ENCODE measurements at regions of chr7 and their contacts with region 1.

Region 1: GRCh38 chr7:151631968-151632749 is 112.5 kb upstream of the RHEB start:
- DNase-seq: peak; percentile 84
- H3K4me3 Mint-ChIP-seq: peak overlapping the region; percentile 97
- H3K27ac Mint-ChIP-seq: peak overlapping the region; percentile 98
- H3K4me1 Mint-ChIP-seq: peaks cover 34% of the 10 kb centered on the region
- H3K27me3 Mint-ChIP-seq: no peaks in the 10 kb centered on the region

Region 2: DNA sequence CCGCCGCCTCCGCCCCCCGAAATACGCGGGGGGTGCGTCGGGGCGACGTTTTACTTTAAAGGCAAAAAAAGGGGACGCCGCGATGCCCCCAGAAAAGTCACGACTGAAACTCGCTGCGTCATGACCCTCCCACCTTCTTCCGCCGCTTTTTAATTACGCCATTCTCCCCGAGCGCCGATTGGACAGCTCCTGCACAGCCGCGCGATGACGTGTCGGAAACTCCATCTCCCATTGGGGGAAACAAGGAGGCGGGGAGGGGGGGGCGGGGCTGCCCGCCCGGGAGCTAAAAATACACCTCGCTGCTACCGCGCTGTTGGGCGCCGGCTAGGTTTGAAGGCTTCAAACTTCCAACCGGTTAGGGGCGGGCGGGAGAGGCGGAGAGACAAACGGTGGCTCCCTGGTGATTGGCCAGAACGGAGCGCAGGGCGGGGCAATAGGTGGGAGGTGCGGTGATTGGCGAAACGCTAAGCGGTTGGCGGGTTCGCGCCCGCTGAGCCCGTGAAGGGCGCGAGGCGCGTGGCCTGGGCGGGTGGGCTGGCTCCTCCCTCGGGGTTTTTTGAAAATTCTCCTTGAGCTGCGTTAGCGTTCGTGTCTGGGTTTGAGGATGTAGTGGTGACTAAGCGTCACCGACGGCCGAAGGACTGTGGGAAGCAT is 112.3 kb before region 1 on chr7 and contains the start of gene RHEB:
- CTCF ChIA-PET with region 1: interaction called, 4 read pairs
- POLR2A ChIA-PET with region 1: interaction called, 10 read pairs
- DNase-seq: peak; percentile 99
- H3K4me3 Mint-ChIP-seq: peak within 1 kb of the TSS; percentile 91
- H3K27ac Mint-ChIP-seq: peak within 1 kb of the TSS; percentile 99
- H3K4me1 Mint-ChIP-seq: peaks cover 40% of the 10 kb centered on the region
- H3K27me3 Mint-ChIP-seq: peaks cover 7% of the 10 kb centered on the region
- total RNA-seq, gene RHEB: 86.8 to 90.7 TPM

Region 3: GRCh38 chr7:151612374-151613160 is 19.6 kb before region 1 on chr7:
- CTCF ChIA-PET with region 1: interaction called, 13 read pairs
- POLR2A ChIA-PET with region 1: no interaction called
- DNase-seq: no peak
- H3K4me3 Mint-ChIP-seq: no peak overlapping the region
- H3K27ac Mint-ChIP-seq: no peak overlapping the region
- H3K4me1 Mint-ChIP-seq: no peaks in the 10 kb centered on the region
- H3K27me3 Mint-ChIP-seq: no peaks in the 10 kb centered on the region

Region 4: GRCh38 chr7:151644554-151644953 is 12.4 kb after region 1 on chr7:
- CTCF ChIA-PET with region 1: interaction called, 33 read pairs
- POLR2A ChIA-PET with region 1: no interaction called
- DNase-seq: no peak
- H3K4me3 Mint-ChIP-seq: no peak overlapping the region
- H3K27ac Mint-ChIP-seq: no peak overlapping the region
- H3K4me1 Mint-ChIP-seq: no peaks in the 10 kb centered on the region
- H3K27me3 Mint-ChIP-seq: no peaks in the 10 kb centered on the region